Endothelial cell of umbilical vein (primary cell): ENCODE measurements at regions of chr5 and their contacts with region 1.

Region 1: DNA sequence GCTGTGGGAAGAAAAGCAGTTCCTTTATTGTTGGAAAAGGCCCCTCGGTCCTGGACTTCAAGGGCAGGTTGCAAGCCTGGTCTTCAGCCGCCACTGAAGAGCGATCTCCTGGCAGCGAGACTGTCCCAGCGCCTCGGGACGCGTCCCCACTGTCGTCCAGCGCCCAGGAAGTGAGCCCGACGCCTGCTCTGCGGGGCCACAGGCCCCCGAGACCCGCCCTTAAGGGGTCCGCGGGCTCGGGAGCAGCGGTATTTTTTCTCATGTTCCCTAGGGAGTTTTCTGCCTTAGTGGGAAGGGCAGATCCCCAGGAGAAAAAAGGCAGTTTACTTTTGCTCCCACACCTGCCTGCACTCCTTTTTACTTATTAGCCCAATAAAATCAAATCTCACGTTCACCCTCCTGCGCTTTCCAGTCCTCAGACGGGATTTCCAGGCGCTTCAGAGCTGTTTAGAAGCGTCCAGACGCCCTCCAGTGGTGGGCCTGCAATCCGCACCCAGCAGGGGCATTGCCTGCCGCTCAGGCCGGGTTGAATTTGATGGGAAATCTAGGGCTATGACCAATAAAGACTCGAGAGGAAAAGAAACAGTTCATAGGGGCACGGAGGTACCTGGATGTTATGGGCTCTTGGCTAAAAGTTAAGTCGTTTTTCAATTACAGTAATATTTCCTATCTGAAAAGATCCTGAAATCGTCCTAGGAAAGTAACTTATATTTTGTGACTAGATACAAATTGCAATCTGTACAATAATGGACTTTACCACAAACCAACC is 2.8 kb upstream of the EFNA5 start:
- DNase-seq: peak; percentile 87
- H3K4me3 ChIP-seq: peak overlapping the region; percentile 40 to 78 (median 45)
- H3K27ac ChIP-seq: peak overlapping the region; percentile 63
- H3K4me1 ChIP-seq: peaks cover 2% of the 10 kb centered on the region
- H3K27me3 ChIP-seq: no peaks in the 10 kb centered on the region
- CTCF ChIP-seq: peak; percentile 96 to 97
- POLR2A ChIP-seq: no peak

Region 2: DNA sequence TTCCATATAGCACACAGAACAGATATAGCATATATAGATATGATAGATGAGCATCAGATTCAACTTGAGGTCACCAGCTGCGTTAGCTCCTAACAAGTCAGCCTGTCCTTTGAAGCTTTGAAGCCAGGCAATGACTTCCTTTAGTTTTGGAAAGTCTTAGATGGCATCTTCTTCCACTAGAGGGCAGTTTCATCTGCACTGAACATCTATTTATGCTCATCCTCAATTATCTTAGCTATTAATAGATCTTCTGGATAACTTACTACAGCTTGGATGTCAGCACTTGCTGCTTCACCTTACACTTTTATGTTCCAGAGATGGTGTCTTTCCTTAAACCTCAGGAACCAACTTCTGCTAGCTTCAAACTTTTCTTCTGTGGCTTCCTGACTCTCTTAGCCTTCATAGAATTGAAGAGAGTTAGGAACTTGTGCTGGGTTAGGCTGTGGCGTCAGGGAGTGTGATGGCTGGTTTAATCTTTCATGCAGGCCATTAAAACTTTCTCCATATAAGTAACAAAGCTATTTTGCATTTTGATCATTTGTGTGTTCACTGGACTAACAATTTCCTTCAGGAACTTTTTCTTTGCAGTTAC is 1404.2 kb before region 1 on chr5:
- CTCF ChIA-PET with region 1: interaction called, 16 read pairs
- POLR2A ChIA-PET with region 1: no interaction called
- dilution Hi-C with region 1: no loop called
- intact Hi-C with region 1: loop called (anchors 1 kb)
- DNase-seq: peak; percentile 43
- H3K4me3 ChIP-seq: no peak overlapping the region
- H3K27ac ChIP-seq: no peak overlapping the region
- H3K4me1 ChIP-seq: no peaks in the 10 kb centered on the region
- H3K27me3 ChIP-seq: no peaks in the 10 kb centered on the region
- CTCF ChIP-seq: peak; percentile 45 to 53
- POLR2A ChIP-seq: no peak

Region 3: DNA sequence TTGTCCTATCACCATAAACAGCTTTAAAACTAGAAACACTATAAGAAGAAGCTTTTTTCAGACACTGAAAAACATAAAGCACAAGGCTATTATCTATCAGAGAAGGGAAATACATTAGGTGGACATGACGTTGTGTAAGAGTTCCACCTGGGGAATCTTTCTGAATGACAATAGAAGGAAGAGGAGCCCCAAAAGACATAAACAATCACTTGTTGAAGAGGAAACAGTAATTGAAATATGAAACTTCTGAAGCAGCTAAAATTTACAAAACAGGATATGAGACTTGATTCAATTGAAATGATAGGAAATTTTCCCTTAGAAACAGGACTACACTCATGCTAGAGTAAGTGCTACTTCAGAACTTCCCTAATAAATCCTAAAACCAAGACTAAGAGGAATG is 936.4 kb before region 1 on chr5:
- CTCF ChIA-PET with region 1: no interaction called
- POLR2A ChIA-PET with region 1: no interaction called
- dilution Hi-C with region 1: no loop called
- intact Hi-C with region 1: loop called (anchors 1 kb)
- DNase-seq: peak; percentile 80
- H3K4me3 ChIP-seq: peak overlapping the region in 1 of 3 experiments; percentile 2
- H3K27ac ChIP-seq: peak overlapping the region; percentile 45
- H3K4me1 ChIP-seq: peaks cover 16% of the 10 kb centered on the region
- H3K27me3 ChIP-seq: no peaks in the 10 kb centered on the region
- CTCF ChIP-seq: no peak
- POLR2A ChIP-seq: no peak

Region 4: GRCh38 chr5:107306597-107306996 is 367.0 kb before region 1 on chr5:
- CTCF ChIA-PET with region 1: interaction called, 3 read pairs
- POLR2A ChIA-PET with region 1: no interaction called
- dilution Hi-C with region 1: no loop called
- intact Hi-C with region 1: loop called (anchors 5 kb)
- DNase-seq: no peak
- H3K4me3 ChIP-seq: no peak overlapping the region
- H3K27ac ChIP-seq: no peak overlapping the region
- H3K4me1 ChIP-seq: no peaks in the 10 kb centered on the region
- H3K27me3 ChIP-seq: no peaks in the 10 kb centered on the region
- CTCF ChIP-seq: no peak
- POLR2A ChIP-seq: no peak

Region 5: DNA sequence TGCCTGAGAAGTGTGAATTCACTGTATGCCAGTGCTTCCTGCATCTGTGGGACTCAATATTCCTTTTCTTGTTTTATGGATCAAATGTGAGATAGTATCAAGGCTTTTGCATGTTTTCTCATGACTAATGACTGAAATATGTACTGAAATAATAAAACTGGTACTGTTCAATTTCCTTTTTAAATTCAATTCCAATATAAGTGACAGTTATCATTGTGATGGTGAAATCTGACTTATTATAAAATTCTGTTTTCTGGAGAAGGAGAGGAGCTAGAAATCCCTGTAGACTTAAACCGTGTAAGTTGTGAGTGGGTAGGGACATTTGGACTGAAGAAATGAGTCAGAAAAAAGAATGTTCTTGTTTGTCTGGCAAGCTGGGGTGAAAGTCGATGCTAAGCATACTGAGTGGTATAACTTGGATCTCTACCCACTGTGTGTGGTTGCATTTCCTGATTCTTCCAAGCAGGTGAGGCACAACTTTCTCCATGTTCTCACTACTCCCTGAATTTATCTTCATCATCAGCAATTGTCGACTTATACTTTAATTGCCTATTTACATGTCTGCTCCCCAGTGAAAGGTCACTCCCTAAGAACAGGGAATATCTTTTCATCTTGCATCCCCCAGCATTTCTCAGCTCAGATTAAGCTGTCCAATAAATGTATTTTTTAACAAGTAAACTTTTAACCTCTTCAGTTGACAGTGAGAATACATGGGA is 247.9 kb before region 1 on chr5:
- CTCF ChIA-PET with region 1: interaction called, 5 read pairs
- POLR2A ChIA-PET with region 1: interaction called, 5 read pairs
- dilution Hi-C with region 1: no loop called
- intact Hi-C with region 1: loop called (anchors 1 kb)
- DNase-seq: peak; percentile 93
- H3K4me3 ChIP-seq: peak overlapping the region in 1 of 3 experiments; percentile 22
- H3K27ac ChIP-seq: peak overlapping the region; percentile 83
- H3K4me1 ChIP-seq: peaks cover 50% of the 10 kb centered on the region
- H3K27me3 ChIP-seq: no peaks in the 10 kb centered on the region
- CTCF ChIP-seq: no peak
- POLR2A ChIP-seq: peak; percentile 59

Region 6: DNA sequence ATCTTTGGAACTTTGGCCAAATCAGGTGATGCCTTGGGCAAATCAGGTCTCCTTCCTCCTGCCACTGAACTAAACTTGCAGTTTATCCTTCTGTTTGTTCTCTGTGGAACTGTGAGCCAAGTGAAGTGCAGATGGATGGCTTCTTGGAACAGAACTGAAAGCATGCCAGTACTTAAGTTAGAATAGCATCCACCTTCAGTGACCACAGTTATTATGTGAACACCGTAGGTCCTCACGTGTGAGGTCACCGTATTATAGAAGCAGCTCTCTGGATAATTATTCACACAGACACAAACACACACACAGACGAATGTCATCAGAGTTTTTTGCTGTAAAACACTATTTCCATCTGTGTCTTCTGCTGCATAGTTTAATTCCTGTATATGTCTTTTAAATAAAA is 165.5 kb before region 1 on chr5:
- CTCF ChIA-PET with region 1: no interaction called
- POLR2A ChIA-PET with region 1: no interaction called
- dilution Hi-C with region 1: no loop called
- intact Hi-C with region 1: no loop called
- DNase-seq: no peak
- H3K4me3 ChIP-seq: no peak overlapping the region
- H3K27ac ChIP-seq: no peak overlapping the region
- H3K4me1 ChIP-seq: peaks cover under 1% of the 10 kb centered on the region
- H3K27me3 ChIP-seq: no peaks in the 10 kb centered on the region
- CTCF ChIP-seq: no peak
- POLR2A ChIP-seq: no peak

Region 7: DNA sequence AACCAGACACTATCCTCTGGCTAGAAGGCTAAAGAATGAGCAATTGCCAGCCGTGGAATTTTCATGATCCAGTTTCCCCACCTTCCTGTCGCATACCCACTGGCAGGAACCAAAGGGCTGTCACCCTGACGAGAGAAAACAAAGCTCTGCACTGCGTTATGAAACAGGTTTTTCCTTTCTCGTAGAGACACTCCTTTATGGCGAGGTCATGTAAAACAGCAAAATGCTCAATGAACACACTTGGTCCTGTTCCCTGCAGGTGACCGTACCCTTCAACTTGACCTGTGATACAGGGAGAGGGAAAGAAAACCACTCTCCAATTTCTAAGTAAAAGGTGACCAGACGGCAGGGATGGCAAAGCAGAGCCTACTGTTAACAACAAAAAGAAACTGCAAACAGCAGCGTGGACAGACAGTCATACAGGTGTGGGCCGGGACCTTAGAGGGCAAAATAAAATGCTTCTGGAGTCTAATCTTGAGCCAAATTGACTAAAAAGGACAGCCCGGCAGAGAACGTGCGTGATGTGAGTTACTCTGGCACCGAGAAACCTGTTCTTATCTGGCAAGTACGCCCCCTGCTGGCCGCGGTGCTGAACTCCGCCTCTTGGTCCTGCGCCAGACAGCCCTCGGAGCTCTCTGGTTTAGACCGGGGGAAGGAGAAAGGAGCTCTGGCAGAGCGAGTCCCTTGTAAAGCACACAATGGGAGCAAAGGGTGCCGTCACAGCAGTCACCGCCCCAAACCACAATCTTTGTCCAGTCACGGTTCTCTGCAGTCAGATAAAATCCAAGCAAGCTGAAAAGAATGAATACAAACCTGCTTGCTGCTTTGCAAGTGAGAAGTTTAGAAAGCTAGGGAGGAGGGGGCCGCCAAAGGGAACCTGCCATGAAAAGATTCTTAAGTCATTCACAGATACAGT is 101.7 kb before region 1 on chr5:
- CTCF ChIA-PET with region 1: interaction called, 14 read pairs
- POLR2A ChIA-PET with region 1: interaction called, 3 read pairs
- dilution Hi-C with region 1: no loop called
- intact Hi-C with region 1: loop called (anchors 1 kb)
- DNase-seq: peak; percentile 97
- H3K4me3 ChIP-seq: peak overlapping the region in 2 of 3 experiments; percentile 31 to 59
- H3K27ac ChIP-seq: peak overlapping the region; percentile 88
- H3K4me1 ChIP-seq: peaks cover 36% of the 10 kb centered on the region
- H3K27me3 ChIP-seq: no peaks in the 10 kb centered on the region
- CTCF ChIP-seq: peak; percentile 93 to 94
- POLR2A ChIP-seq: no peak

Region 8: GRCh38 chr5:107781451-107781850 is 107.9 kb after region 1 on chr5:
- CTCF ChIA-PET with region 1: no interaction called
- POLR2A ChIA-PET with region 1: no interaction called
- dilution Hi-C with region 1: no loop called
- intact Hi-C with region 1: no loop called
- DNase-seq: no peak
- H3K4me3 ChIP-seq: no peak overlapping the region
- H3K27ac ChIP-seq: no peak overlapping the region
- H3K4me1 ChIP-seq: no peaks in the 10 kb centered on the region
- H3K27me3 ChIP-seq: peaks cover 0 to 2% of the 10 kb centered on the region in 2 experiments
- CTCF ChIP-seq: no peak
- POLR2A ChIP-seq: no peak

Region 9: GRCh38 chr5:107855171-107855570 is 181.6 kb after region 1 on chr5:
- CTCF ChIA-PET with region 1: no interaction called
- POLR2A ChIA-PET with region 1: no interaction called
- dilution Hi-C with region 1: no loop called
- intact Hi-C with region 1: no loop called
- DNase-seq: no peak
- H3K4me3 ChIP-seq: no peak overlapping the region
- H3K27ac ChIP-seq: no peak overlapping the region
- H3K4me1 ChIP-seq: no peaks in the 10 kb centered on the region
- H3K27me3 ChIP-seq: no peaks in the 10 kb centered on the region
- CTCF ChIP-seq: no peak
- POLR2A ChIP-seq: no peak

Region 10: DNA sequence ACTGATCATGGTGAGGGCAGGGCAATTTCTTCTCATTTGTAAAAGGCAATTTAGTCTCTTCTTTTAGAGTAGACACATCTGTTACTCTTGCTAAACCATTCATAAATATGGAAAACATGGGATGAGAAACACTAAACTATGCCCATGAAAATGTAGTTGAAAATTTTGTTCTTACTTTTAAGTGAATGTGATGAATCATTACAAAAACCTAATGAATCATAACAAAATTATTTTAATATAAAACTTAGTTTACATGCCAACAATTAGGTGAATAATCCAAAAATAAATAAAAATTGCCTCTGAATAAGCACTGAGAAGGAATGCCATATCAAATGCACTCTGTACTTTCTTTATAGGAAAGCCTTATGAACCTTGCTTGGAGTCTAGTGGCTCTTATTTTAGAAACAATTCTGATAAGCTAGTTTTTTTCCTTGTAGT is 294.9 kb after region 1 on chr5:
- CTCF ChIA-PET with region 1: no interaction called
- POLR2A ChIA-PET with region 1: no interaction called
- dilution Hi-C with region 1: no loop called
- intact Hi-C with region 1: no loop called
- DNase-seq: no peak
- H3K4me3 ChIP-seq: no peak overlapping the region
- H3K27ac ChIP-seq: no peak overlapping the region
- H3K4me1 ChIP-seq: peaks cover 7% of the 10 kb centered on the region
- H3K27me3 ChIP-seq: no peaks in the 10 kb centered on the region
- CTCF ChIP-seq: no peak
- POLR2A ChIP-seq: no peak